Ovary (tissue), 10 donors: ENCODE measurements at regions of chr9 and their contacts with region 1.

Region 1: DNA sequence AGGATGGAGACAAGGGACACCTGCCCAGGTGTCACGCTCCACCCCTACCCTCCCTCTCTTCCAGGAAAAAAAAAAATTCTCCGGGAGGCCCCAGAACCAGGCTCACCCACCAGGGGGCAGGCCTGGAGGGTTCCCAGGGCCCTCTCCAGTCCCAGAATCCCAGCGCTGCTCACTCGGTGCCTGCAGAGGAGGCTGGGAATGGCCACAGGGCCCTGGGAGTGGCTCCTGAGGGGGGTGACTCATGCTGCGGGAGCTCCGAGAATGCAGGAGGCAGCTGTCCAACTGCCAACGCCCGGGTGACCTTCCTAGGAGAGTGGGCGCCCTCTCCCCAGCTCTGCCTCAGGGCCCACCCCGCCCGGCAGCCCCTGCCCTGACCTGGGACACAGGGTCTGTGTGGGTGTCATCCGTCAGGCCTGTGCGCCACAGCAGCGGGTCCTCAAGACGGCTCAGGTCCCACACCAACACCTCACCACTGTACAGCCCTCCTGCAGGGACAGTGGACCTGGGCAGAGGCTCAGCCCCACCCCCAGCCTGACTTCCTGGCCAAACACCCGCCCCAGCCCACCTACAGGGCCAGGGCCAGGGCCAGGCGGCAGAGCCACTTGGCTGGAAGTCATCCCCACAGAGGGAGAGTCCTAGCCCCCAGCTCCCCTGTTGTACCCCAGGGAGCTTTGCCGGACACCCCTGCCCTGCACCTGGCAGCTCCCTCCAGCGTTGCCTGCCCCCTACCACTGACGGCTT is 21.2 kb downstream of the DYNC2I2 start:
- DNase-seq: peak; percentile 85 to 92 (median 88)
- H3K4me3 ChIP-seq: no peak overlapping the region
- H3K27ac ChIP-seq: peak overlapping the region; percentile 41 to 78
- H3K4me1 ChIP-seq: peaks cover 14% of the 10 kb centered on the region
- H3K27me3 ChIP-seq: no peaks in the 10 kb centered on the region
- CTCF ChIP-seq: peak; percentile 57 to 74 (median 61)
- EP300 ChIP-seq: no peak
- POLR2A ChIP-seq: no peak

Region 2: DNA sequence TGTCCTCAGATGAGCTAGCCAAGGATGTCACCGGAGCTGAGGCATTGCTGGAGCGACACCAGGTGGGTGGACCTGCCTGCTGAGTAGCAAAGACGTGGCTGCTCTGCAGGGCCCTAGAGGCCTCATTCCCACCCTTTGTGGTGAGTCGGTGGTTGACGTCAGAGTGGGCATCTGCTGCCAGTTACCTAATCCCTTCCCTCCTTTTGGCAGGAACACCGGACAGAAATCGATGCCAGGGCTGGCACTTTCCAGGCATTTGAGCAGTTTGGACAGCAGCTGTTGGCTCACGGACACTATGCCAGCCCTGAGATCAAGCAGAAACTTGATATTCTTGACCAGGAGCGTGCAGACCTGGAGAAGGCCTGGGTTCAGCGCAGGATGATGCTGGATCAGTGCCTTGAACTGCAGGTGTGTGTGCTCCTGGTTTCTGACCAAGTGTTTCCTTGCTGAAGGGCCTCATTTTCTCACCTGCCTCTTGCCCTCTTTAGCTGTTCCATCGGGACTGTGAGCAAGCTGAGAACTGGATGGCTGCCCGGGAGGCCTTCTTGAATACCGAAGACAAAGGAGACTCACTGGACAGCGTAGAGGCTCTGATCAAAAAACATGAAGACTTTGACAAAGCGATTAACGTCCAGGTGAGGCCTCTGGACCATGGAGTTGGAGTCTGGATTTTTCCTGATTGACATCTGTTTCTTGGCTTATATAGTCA is 27.7 kb before region 1 on chr9:
- intact Hi-C with region 1: no loop called
- DNase-seq: no peak
- H3K4me3 ChIP-seq: no peak overlapping the region
- H3K27ac ChIP-seq: no peak overlapping the region
- H3K4me1 ChIP-seq: no peaks in the 10 kb centered on the region
- H3K27me3 ChIP-seq: no peaks in the 10 kb centered on the region
- CTCF ChIP-seq: no peak
- EP300 ChIP-seq: no peak
- POLR2A ChIP-seq: no peak

Region 3: GRCh38 chr9:128688512-128689292 is 53.2 kb after region 1 on chr9 and contains the start of gene SET:
- intact Hi-C with region 1: loop called in 1 of 4 experiments (anchors 5 kb)
- DNase-seq: peak; percentile 95 to 97 (median 96)
- H3K4me3 ChIP-seq: peak within 1 kb of the TSS; percentile 83
- H3K27ac ChIP-seq: peak within 1 kb of the TSS; percentile 97 to 100
- H3K4me1 ChIP-seq: peaks cover 6% of the 10 kb centered on the region
- H3K27me3 ChIP-seq: no peaks in the 10 kb centered on the region
- CTCF ChIP-seq: no peak
- EP300 ChIP-seq: no peak
- POLR2A ChIP-seq: peak; percentile 94
- total RNA-seq, gene SET: 119 to 328 (median 291) TPM

Region 4: DNA sequence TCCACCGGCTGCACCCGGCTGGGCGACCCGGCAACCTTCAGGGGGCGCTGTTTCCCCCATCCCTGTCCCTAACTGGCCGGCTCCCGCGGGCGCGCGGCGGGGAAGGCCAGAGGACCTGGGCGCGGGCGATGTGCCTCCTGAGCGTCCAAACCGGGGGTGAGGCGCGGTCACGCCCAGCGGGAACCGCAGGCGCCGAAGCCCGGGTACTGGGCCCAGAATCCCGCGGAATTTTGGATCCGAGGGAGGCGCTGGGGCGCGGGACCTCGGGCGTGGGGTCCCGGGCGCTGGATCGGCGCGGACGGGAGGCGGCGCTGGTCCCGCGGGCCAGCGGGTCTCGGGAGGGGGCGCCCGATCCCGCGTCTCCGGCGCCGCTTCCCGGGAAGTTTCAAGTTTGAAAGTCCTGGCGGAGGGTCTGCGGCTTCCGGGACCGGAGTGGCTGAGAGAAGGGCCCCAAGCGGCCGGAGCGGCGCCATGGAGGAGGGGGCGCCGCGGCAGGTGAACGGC is 67.0 kb after region 1 on chr9 and contains the start of gene PKN3:
- intact Hi-C with region 1: loop called in 1 of 4 experiments (anchors 2 kb)
- DNase-seq: peak; percentile 83 to 92 (median 89)
- H3K4me3 ChIP-seq: peak within 1 kb of the TSS; percentile 68
- H3K27ac ChIP-seq: peak within 1 kb of the TSS; percentile 54
- H3K4me1 ChIP-seq: peaks cover 1% of the 10 kb centered on the region
- H3K27me3 ChIP-seq: no peaks in the 10 kb centered on the region
- CTCF ChIP-seq: peak; percentile 87 to 94 (median 89)
- EP300 ChIP-seq: no peak
- POLR2A ChIP-seq: peak; percentile 22
- total RNA-seq, gene PKN3: 1.4 to 7.6 (median 4.2) TPM

Region 5: GRCh38 chr9:129473523-129474229 is 838.2 kb after region 1 on chr9:
- intact Hi-C with region 1: no loop called
- DNase-seq: peak; percentile 76 to 82 (median 80)
- H3K4me3 ChIP-seq: no peak overlapping the region
- H3K27ac ChIP-seq: peak overlapping the region; percentile 5 to 87
- H3K4me1 ChIP-seq: peaks cover 21% of the 10 kb centered on the region
- H3K27me3 ChIP-seq: no peaks in the 10 kb centered on the region
- CTCF ChIP-seq: no peak
- EP300 ChIP-seq: peak; percentile 31
- POLR2A ChIP-seq: no peak